ENCODE measurements at regions of chr10 and their contacts with region 1.

Region 1: DNA sequence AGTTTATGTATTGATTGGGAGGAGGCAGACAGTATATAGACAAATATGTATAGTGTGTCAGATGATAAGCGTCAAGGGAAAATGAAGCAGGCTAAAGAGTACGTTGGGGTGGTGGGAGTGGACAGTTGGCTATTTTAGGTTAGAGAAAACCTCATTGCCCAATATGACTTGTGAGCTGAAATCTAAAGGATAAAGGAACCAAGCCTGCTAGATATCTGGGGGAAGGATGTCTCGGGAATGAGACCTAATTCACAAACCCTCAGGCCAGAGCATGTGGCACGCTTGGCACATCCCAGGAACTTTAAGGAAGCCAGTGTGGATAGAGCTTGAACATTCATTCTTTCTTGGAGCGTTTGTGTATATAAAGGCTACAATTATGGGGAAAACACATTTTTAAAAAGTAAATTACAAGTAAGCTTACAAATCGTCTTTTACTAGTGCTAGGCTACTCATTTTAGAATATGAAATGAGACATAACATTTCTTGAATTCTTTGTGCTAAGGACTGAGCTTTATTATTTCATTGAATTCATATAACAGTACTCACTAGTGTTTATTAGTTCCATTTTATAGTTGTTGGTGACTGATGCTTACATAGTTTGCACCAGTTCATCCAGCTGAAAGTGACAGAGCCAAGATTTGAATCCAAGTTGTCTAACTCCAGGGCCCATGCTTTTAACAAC is 9.7 kb downstream of the FHIP2A start:
- DNase-seq: no peak
- ATAC-seq: no peak
- H3K4me3 ChIP-seq: no peak overlapping the region
- H3K27ac ChIP-seq: no peak overlapping the region
- H3K4me1 ChIP-seq: peaks cover 0 to 24% (median 7%) of the 10 kb centered on the region in 12 donors
- H3K27me3 ChIP-seq: no peaks in the 10 kb centered on the region
- CTCF ChIP-seq: no peak
- POLR2A ChIP-seq: no peak

Region 2: DNA sequence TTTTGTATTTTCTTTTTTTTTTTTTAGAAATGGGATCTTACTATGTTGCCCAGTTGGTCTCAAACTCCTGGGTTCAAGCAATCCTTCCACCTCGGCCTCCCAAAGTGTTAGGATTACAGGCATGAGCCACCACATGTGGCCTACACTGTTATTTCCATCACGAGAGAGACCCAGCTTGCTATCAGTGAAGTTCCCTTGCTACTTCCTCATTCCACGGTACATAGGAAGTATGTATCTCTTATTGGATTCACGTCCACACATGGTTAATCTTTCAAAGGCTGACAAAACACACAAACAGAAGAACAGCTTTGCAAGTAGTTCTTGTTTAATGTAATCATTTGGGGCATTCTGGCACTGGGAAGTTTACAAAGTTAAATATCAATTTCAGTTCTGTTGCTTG is 1028.3 kb before region 1 on chr10:
- intact Hi-C with region 1: no loop called
- DNase-seq: no peak
- ATAC-seq: no peak
- H3K4me3 ChIP-seq: no peak overlapping the region
- H3K27ac ChIP-seq: no peak overlapping the region
- H3K4me1 ChIP-seq: peaks cover 0 to 6% (median 0%) of the 10 kb centered on the region in 12 donors
- H3K27me3 ChIP-seq: no peaks in the 10 kb centered on the region
- CTCF ChIP-seq: no peak
- POLR2A ChIP-seq: no peak

Region 3: GRCh38 chr10:114181981-114182380 is 649.3 kb before region 1 on chr10:
- intact Hi-C with region 1: loop called in 1 of 10 experiments (anchors 5 kb)
- DNase-seq: peak; percentile 69 to 87 (median 73)
- ATAC-seq: peak; percentile 84 to 95 (median 90)
- H3K4me3 ChIP-seq: peak overlapping the region in 7 of 12 donors; percentile 2 to 31 (median 20)
- H3K27ac ChIP-seq: peak overlapping the region in 5 of 12 donors; percentile 51 to 62 (median 52)
- H3K4me1 ChIP-seq: peaks cover 0 to 11% (median 0%) of the 10 kb centered on the region in 12 donors
- H3K27me3 ChIP-seq: no peaks in the 10 kb centered on the region
- CTCF ChIP-seq: no peak
- POLR2A ChIP-seq: no peak

Region 4: DNA sequence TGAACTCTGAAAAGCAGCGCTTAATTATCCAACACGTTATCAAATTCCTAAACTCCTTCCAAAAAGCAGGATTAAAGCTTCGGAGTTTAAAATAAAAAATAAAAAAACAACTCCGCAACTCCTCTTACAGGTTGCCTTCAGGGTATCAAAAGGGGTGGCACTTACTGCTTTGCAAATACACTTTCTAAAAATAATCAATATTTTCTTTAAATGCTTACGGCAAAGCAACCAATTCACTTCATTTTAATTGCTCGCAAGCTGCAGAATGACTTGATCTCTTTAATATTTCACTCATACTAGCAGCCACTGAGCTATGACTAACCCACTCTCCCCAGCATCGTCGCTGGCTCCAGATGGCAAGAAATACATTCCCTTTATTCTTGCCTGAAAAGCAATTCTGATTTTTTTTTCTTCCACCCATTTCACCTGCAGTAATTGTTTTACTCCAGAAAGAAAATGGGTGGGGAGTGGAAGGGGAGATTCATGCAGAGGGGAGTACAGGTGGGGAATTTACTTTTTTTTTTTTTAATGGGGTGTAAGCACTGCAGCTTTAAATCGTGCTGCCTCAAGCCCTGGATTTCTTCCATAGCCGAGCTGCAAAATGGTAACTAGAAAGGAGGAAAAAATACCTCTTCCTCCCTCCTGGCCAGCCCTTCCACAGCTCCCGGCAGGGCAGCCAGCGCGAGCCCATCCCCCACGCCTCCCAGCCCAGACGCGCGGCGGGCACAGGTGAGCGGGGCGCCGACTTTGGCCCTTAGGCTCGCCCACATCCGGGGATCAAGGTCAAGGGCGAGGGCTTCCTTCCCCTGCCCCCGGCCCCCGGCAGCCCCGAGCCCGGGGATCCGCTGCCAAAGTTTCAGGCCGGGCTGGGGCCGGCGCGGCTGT is 64.0 kb before region 1 on chr10:
- intact Hi-C with region 1: no loop called
- DNase-seq: peak; percentile 47 to 68 (median 52)
- ATAC-seq: peak in 3 of 4 donors; percentile 77 to 78 (median 77)
- H3K4me3 ChIP-seq: peak overlapping the region; percentile 73 to 97 (median 86)
- H3K27ac ChIP-seq: peak overlapping the region; percentile 79 to 95 (median 92)
- H3K4me1 ChIP-seq: peaks cover 0 to 50% (median 18%) of the 10 kb centered on the region in 12 donors
- H3K27me3 ChIP-seq: peaks cover 0 to 22% (median 0%) of the 10 kb centered on the region in 9 donors
- CTCF ChIP-seq: no peak
- POLR2A ChIP-seq: no peak